Aorta (tissue), 5 donors: ENCODE measurements at regions of chr1 and their contacts with region 1.

Region 1: GRCh38 chr1:209576798-209577197 is 6.7 kb upstream of the CAMK1G start:
- DNase-seq: peak; percentile 85 to 91
- ATAC-seq: peak; percentile 87
- H3K4me3 ChIP-seq: no peak overlapping the region
- H3K27ac ChIP-seq: no peak overlapping the region
- H3K4me1 ChIP-seq: no peaks in the 10 kb centered on the region
- H3K27me3 ChIP-seq: no peaks in the 10 kb centered on the region

Region 2: GRCh38 chr1:209428241-209428921 is 148.4 kb before region 1 on chr1:
- intact Hi-C with region 1: no loop called
- DNase-seq: no peak
- ATAC-seq: no peak
- H3K4me3 ChIP-seq: no peak overlapping the region
- H3K27ac ChIP-seq: no peak overlapping the region
- H3K4me1 ChIP-seq: no peaks in the 10 kb centered on the region
- H3K27me3 ChIP-seq: no peaks in the 10 kb centered on the region

Region 3: DNA sequence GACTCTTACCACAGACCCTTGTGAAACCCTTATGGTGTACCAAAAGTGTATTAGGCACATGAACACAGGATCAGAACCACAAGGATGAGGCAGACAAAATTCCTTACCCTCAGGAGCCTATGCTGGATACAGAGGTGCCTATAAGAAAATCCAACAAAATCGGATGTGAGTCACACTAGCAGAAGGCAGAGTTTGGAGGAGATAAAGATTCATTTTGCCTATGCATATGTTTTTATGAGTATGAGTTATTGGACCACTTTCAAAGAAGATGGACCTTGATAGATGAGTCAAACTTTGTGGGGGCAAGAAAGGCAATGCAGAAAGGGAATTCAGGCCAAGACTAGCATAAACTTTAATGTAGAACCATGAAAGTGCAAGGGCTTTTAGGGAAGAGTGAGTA is 23.7 kb after region 1 on chr1:
- intact Hi-C with region 1: no loop called
- DNase-seq: no peak
- ATAC-seq: no peak
- H3K4me3 ChIP-seq: no peak overlapping the region
- H3K27ac ChIP-seq: no peak overlapping the region
- H3K4me1 ChIP-seq: no peaks in the 10 kb centered on the region
- H3K27me3 ChIP-seq: peaks cover 0 to 1% of the 10 kb centered on the region in 2 donors

Region 4: DNA sequence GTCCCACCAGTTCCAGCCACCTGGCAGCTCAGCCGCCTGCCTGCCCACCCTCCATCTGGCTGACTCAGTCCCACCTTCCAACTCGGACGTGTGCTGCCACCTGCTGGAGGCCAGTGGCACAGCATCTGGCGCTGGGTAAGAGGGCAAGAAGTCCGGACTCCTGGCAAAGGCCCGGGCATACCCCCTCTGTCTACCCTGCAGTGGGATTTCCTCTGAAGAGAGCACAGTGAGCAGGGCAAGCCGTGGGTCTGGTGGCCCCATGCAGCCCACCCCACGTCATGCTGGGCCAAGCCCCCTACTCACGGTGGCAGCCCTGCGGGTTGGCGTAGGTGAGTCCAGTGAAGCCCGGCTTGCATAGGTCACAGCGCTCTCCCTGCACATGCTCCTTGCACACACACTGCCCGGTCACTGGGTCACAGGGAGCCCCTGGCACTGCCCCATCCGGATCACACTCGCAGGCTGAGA is 51.0 kb after region 1 on chr1:
- intact Hi-C with region 1: loop called in 1 of 2 experiments (anchors 2 kb)
- DNase-seq: peak; percentile 85 to 91
- ATAC-seq: peak; percentile 79
- H3K4me3 ChIP-seq: no peak overlapping the region
- H3K27ac ChIP-seq: no peak overlapping the region
- H3K4me1 ChIP-seq: no peaks in the 10 kb centered on the region
- H3K27me3 ChIP-seq: no peaks in the 10 kb centered on the region

Region 5: GRCh38 chr1:209692745-209693504 is 116.1 kb after region 1 on chr1:
- intact Hi-C with region 1: loop called (anchors 1 to 5 kb)
- DNase-seq: peak; percentile 79 to 82
- ATAC-seq: peak; percentile 76
- H3K4me3 ChIP-seq: no peak overlapping the region
- H3K27ac ChIP-seq: no peak overlapping the region
- H3K4me1 ChIP-seq: no peaks in the 10 kb centered on the region
- H3K27me3 ChIP-seq: peaks cover 0 to 1% of the 10 kb centered on the region in 2 donors

Region 6: DNA sequence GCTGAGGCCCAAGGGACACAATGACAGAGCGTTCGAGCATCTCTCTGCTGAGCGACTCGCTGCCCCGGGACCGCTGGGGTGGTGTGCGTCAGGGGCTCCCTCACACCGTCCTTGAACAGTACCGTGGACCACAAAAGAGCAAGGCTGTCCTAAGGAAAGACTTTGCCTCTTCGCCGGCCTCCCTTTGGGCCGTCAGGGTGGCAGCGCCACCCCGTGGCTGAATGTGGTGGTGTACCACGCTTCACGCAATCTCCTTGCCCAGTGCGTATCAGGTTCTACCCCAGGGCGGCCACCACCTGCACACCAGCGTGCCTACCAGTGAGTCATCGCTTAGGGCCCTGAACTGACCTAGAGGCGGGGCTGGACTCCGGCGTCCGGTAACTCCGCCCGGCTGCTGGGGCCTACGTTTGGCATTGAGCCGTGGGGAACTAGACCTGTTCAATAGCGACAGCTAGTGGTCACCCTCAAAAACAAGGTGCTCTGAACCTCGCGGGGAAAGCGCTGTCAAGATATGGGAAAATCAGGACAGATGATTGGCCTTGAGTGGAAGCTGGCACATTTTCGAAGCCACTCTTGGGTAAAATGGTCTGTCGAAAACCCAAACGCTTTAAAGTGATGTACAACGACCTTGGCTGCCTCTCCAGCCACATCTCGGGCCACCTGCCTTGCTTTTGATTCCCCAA is 170.9 kb after region 1 on chr1:
- intact Hi-C with region 1: loop called in 1 of 2 experiments (anchors 5 kb)
- DNase-seq: peak; percentile 94
- ATAC-seq: peak; percentile 92
- H3K4me3 ChIP-seq: no peak overlapping the region
- H3K27ac ChIP-seq: no peak overlapping the region
- H3K4me1 ChIP-seq: no peaks in the 10 kb centered on the region
- H3K27me3 ChIP-seq: no peaks in the 10 kb centered on the region